ENCODE measurements at regions of chr7 and their contacts with region 1.

Region 1: GRCh38 chr7:132569884-132570614 is 6.2 kb downstream of the PLXNA4 start:
- DNase-seq: no peak
- H3K4me3 ChIP-seq: no peak overlapping the region
- H3K27ac ChIP-seq: no peak overlapping the region
- H3K4me1 ChIP-seq: peaks cover 0 to 5% of the 10 kb centered on the region in 2 donors
- H3K27me3 ChIP-seq: no peaks in the 10 kb centered on the region
- CTCF ChIP-seq: no peak
- POLR2A ChIP-seq: no peak

Region 2: GRCh38 chr7:132443776-132444520 is 126.1 kb before region 1 on chr7:
- intact Hi-C with region 1: loop called (anchors 5 kb)
- DNase-seq: no peak
- H3K4me3 ChIP-seq: no peak overlapping the region
- H3K27ac ChIP-seq: no peak overlapping the region
- H3K4me1 ChIP-seq: no peaks in the 10 kb centered on the region
- H3K27me3 ChIP-seq: no peaks in the 10 kb centered on the region
- CTCF ChIP-seq: no peak
- POLR2A ChIP-seq: no peak

Region 3: DNA sequence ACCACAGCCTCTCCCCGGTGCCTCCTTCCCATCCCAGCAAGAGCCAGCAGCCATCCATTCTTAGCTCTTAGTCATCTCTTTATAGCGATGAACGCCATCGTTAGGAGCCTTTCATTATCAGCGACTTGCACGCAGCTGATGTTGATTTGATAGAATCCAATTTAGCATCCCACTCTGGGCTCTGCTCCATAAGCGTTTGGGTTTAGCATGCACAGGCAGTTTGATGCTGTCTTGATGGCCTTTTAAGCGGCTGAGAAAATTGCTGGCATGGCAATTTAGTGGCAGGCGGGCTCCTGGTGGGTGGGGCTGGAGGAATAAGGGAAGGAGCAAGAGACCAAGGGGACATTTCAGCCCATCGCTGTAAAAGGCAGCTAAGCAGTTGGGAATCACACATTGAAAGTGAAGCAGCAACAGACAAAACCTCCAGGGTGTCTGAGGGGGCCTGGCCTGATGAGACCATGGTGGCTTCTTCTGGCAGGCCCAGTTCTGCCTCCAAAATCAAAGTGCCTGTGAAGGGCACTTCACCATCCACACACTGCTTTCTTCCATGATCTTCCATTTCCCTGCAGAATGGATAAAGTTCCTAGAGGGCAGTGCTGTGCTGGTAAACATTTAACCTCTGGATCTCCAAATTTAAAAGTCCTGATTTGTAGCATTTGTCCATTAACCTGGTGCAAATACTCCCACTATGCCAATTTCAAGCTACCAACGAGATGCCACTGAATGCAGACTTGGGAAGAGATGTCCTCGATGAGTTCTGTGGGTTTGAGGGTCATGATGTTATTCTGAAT is 114.0 kb after region 1 on chr7:
- intact Hi-C with region 1: no loop called
- DNase-seq: no peak
- H3K4me3 ChIP-seq: no peak overlapping the region
- H3K27ac ChIP-seq: no peak overlapping the region
- H3K4me1 ChIP-seq: no peaks in the 10 kb centered on the region
- H3K27me3 ChIP-seq: no peaks in the 10 kb centered on the region
- CTCF ChIP-seq: no peak
- POLR2A ChIP-seq: no peak

Region 4: GRCh38 chr7:132735476-132735875 is 165.4 kb after region 1 on chr7:
- intact Hi-C with region 1: no loop called
- DNase-seq: peak; percentile 31 to 51
- H3K4me3 ChIP-seq: no peak overlapping the region
- H3K27ac ChIP-seq: no peak overlapping the region
- H3K4me1 ChIP-seq: peaks cover 4 to 11% of the 10 kb centered on the region in 2 donors
- H3K27me3 ChIP-seq: no peaks in the 10 kb centered on the region
- CTCF ChIP-seq: no peak
- POLR2A ChIP-seq: no peak

Region 5: DNA sequence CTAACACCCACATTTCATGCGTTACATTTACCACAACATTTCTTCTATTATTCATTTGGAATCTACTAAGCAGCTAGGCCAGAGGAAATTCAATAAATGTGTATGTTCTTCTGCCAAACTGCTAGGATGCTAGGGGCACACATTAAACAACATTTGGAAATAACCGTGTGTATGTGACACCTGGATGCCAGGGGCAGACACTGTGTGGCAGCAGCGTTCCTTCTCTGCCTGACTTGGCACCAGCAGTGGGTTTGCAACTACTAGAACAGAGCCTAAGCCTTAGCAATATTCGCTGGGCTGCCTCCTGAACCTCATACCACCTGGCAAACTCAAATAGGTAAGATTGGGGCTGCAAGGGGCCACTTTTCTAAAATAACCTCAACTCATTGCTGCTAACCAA is 329.8 kb after region 1 on chr7:
- intact Hi-C with region 1: no loop called
- DNase-seq: peak in 1 of 2 donors; percentile 4
- H3K4me3 ChIP-seq: no peak overlapping the region
- H3K27ac ChIP-seq: no peak overlapping the region
- H3K4me1 ChIP-seq: no peaks in the 10 kb centered on the region
- H3K27me3 ChIP-seq: no peaks in the 10 kb centered on the region
- CTCF ChIP-seq: no peak
- POLR2A ChIP-seq: no peak